ENCODE measurements at regions of chr15 and their contacts with region 1.

Region 1: DNA sequence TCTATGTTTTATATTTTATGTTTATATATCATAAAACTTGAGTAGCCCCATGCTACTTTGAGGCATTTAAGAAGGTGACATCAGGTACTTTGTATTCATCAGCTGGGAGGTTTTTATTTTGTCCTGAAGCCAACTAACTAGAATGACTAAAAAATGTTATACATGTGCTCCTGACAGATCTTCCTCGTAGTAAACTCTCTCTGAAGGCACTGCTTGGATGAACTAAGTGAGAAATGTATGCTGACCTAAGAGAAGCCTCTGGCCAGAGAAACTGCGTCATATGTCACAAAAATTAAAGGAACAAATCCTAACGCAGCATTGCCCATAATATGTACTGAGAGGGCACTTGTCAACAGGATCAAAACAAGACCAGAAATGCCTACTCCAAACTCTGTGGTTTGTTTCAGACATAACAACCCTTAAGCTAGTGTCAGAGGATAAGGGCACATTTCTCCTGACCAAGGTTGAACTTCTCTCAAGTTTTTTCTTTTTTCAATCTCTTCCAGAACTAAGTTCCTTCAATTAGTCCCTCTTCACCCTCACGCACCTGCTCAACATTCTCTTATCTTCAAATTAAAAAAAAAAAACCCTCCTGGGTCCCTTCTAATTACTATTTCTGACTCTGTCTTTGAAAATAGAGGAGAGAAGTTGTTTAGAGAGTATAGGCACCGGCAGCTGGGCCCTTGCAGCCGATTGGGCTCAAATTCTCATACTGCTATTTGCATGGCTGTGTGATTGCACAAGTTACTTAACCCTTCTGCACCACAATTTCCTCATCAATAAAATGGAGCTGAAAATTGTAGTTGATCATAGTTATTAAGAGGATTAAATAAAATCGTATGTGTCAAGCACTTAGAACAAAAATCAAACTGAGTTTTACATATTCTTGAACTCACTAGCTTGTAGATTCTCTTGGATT is 159.0 kb downstream of the FRMD5 start:
- DNase-seq: no peak
- H3K27ac ChIP-seq: no peak overlapping the region
- CTCF ChIP-seq: no peak

Region 2: DNA sequence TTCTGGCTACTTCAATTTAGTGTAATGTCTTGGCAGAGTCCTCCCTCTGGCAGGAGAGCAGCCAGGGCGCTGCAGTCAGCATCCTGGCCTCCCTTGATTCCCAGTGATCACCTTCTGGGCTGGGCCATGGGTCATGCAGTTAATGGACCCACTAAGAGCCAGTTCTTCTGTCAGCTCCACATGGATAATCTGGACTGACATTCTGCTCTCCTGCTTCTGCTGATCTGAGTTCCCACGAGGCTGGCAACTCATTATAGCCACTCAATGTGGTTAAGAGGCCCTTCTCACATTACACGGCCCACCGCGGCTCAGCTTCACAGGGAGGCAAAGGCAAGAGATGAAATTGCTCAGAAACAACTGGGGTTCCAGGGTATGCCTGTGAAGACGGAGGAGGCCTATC is 115.2 kb before region 1 on chr15:
- CTCF ChIA-PET with region 1: no interaction called
- POLR2A ChIA-PET with region 1: no interaction called
- DNase-seq: no peak
- H3K27ac ChIP-seq: no peak overlapping the region
- CTCF ChIP-seq: no peak

Region 3: DNA sequence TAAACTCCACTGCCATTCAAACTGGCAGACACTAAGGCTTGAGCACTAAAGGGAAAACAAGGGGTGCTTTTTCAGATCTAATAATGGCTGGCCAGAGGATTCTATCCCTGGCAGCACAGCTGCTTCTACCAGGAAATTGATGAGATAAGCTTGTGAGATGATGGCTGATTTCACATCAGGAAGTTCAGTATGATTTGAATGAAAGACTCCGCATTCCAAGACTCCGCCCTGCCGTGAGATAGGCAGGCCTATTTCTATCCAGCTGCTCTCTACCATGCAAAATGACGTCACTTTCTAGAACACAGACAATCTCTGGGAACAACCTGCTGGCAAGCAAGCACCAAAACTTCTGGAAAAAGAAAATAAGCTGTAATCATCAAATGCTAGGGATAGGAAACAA is 37.4 kb before region 1 on chr15:
- CTCF ChIA-PET with region 1: interaction called, 12 read pairs
- POLR2A ChIA-PET with region 1: no interaction called
- DNase-seq: no peak
- H3K27ac ChIP-seq: no peak overlapping the region
- CTCF ChIP-seq: no peak

Region 4: DNA sequence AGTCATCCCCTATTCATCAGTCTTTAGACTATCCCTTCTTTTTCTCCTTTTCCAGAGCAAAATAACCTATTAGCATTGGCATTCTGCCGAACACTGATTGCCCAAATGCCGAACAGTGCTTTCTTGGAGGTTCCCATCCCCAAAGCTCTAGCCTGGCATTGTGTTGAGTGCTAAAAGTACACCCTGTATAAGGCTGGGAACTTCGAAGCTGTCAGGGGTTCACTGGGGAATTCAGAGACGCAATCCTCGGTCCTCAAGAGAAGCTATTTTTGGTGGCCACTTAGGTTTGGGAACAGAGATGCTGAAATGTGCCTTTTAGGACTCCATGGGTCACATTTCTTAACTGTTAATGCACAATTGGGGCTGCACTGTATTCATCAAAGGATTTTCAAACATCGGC is 150.7 kb after region 1 on chr15:
- CTCF ChIA-PET with region 1: no interaction called
- POLR2A ChIA-PET with region 1: no interaction called
- DNase-seq: no peak
- H3K27ac ChIP-seq: no peak overlapping the region
- CTCF ChIP-seq: no peak